Activated T-helper 1 cell treated with anti-CD3 and anti-CD28 coated beads, Interleukin-12 subunit alpha, Interleukin-12 subunit beta, Interleukin-2, Interleukin-4 antibody, amounts not matched to agents 30 ng/mL and 10 ng/mL and 1 ng/mL, durations not matched to agents 14 hours and 24 hours and 36 hours (primary cell): ENCODE measurements at regions of chr16 and their contacts with region 1.

Region 1: GRCh38 chr16:1705688-1706385 is at the start of gene MAPK8IP3:
- DNase-seq: peak; percentile 96
- H3K4me3 Mint-ChIP-seq: peak within 1 kb of the TSS; percentile 94
- H3K27ac Mint-ChIP-seq: peak within 1 kb of the TSS; percentile 96
- H3K4me1 Mint-ChIP-seq: peaks cover 28% of the 10 kb centered on the region
- H3K27me3 Mint-ChIP-seq: no peaks in the 10 kb centered on the region
- total RNA-seq, gene MAPK8IP3: 84.4 and 84.6 TPM in 2 replicates

Region 2: GRCh38 chr16:1413684-1414531 is 291.9 kb before region 1 on chr16:
- intact Hi-C with region 1: loop called (anchors 10 kb)
- DNase-seq: peak; percentile 58
- H3K4me3 Mint-ChIP-seq: peak overlapping the region; percentile 83
- H3K27ac Mint-ChIP-seq: peak overlapping the region; percentile 75
- H3K4me1 Mint-ChIP-seq: no peaks in the 10 kb centered on the region
- H3K27me3 Mint-ChIP-seq: no peaks in the 10 kb centered on the region

Region 3: GRCh38 chr16:1492923-1493745 is 212.7 kb before region 1 on chr16 and contains the start of gene TELO2:
- intact Hi-C with region 1: loop called (anchors 1 kb)
- DNase-seq: peak; percentile 85
- H3K4me3 Mint-ChIP-seq: peak within 1 kb of the TSS; percentile 92
- H3K27ac Mint-ChIP-seq: peak within 1 kb of the TSS; percentile 98
- H3K4me1 Mint-ChIP-seq: peaks cover 8% of the 10 kb centered on the region
- H3K27me3 Mint-ChIP-seq: no peaks in the 10 kb centered on the region
- total RNA-seq, gene TELO2: 94.1 and 95.3 TPM in 2 replicates

Region 4: GRCh38 chr16:1543085-1543896 is 162.5 kb before region 1 on chr16:
- intact Hi-C with region 1: loop called (anchors 1 kb)
- DNase-seq: peak; percentile 38
- H3K4me3 Mint-ChIP-seq: peak overlapping the region; percentile 70
- H3K27ac Mint-ChIP-seq: peak overlapping the region; percentile 91
- H3K4me1 Mint-ChIP-seq: peaks cover 34% of the 10 kb centered on the region
- H3K27me3 Mint-ChIP-seq: no peaks in the 10 kb centered on the region

Region 5: GRCh38 chr16:1677802-1678496 is 27.9 kb before region 1 on chr16 and contains the start of gene JPT2:
- intact Hi-C with region 1: loop called (anchors 1 kb)
- DNase-seq: peak; percentile 96
- H3K4me3 Mint-ChIP-seq: peak within 1 kb of the TSS; percentile 92
- H3K27ac Mint-ChIP-seq: peak within 1 kb of the TSS; percentile 91
- H3K4me1 Mint-ChIP-seq: peaks cover 32% of the 10 kb centered on the region
- H3K27me3 Mint-ChIP-seq: no peaks in the 10 kb centered on the region
- total RNA-seq, gene JPT2: 106 and 119 TPM in 2 replicates

Region 6: DNA sequence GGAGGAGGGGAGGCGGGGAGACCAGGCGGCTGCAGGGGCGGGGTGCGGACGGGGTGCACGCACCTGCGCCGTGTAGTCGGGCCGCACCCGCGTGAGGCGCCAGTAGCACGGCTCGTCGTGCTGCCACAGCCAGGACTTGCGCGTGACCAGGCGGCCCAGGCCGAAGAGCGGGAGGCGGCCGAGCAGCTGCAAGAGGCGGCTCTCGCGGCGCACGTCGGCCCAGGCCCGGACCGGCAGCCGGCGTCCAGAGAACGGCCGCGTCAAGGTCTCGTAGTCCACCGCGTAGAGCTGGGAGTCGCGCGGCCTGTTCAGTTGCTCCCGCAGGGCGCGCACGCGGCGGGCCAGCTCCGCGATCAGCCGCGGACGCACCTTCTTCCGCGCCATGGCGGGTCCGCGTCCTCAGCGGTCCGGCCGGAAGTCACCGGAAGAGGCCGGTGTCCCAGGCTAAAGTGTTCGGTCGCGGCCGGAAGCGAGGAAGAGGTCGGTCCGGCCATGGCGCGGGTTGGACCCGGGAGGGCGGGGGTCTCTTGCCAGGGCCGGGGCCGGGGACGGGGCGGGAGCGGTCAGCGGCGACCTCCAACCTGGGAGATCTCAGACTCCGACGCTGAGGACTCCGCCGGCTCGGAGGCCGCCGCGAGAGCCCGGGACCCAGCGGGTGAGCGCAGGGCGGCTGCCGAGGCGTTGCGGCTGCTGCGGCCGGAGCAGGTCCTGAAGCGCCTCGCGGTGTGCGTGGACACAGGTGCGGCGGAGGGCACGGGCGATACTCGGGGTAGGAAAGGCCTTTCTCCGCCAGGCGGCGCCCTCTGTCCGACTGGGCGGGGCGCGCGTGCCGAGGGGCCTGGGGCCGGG is 67.1 kb after region 1 on chr16 and contains the starts of genes EME2 and MRPS34:
- intact Hi-C with region 1: loop called (anchors 5 kb)
- DNase-seq: peak; percentile 82
- H3K4me3 Mint-ChIP-seq: peak within 1 kb of the TSS; percentile 100
- H3K27ac Mint-ChIP-seq: peak within 1 kb of the TSS; percentile 98
- H3K4me1 Mint-ChIP-seq: peaks cover 8% of the 10 kb centered on the region
- H3K27me3 Mint-ChIP-seq: no peaks in the 10 kb centered on the region
- total RNA-seq, gene EME2: 31.0 and 32.7 TPM in 2 replicates
- total RNA-seq, gene MRPS34: 209 and 215 TPM in 2 replicates